ENCODE measurements at regions of chr1 and their contacts with region 1.

Region 1: DNA sequence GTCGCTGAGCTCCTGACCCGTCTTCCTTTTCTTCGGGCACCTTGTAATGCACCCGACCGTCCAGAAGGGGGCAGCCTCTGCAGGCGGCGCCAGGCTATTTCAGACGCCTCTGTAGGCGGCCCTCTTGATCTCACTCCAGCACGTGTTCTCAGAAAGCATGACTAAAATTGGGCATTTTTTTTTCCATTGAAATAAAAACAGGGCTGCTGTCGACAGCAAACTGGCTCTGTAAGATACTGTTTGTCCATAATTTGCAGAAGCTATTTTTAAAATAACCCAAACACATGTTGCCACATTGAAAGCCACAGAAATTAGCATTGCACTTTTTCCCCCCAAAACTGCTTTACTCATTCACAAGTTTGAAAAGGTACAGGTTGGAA is 78.0 kb downstream of the STUM start:
- DNase-seq: peak; percentile 90
- H3K4me3 Mint-ChIP-seq: peak overlapping the region; percentile 10
- H3K27ac Mint-ChIP-seq: peak overlapping the region; percentile 68
- H3K4me1 Mint-ChIP-seq: peaks cover 25% of the 10 kb centered on the region
- H3K27me3 Mint-ChIP-seq: no peaks in the 10 kb centered on the region

Region 2: GRCh38 chr1:226547754-226548191 is 78.8 kb before region 1 on chr1:
- CTCF ChIA-PET with region 1: interaction called, 8 read pairs
- intact Hi-C with region 1: loop called (anchors 5 kb)
- DNase-seq: peak; percentile 82
- H3K4me3 Mint-ChIP-seq: no peak overlapping the region
- H3K27ac Mint-ChIP-seq: no peak overlapping the region
- H3K4me1 Mint-ChIP-seq: peaks cover 10% of the 10 kb centered on the region
- H3K27me3 Mint-ChIP-seq: peaks cover 33% of the 10 kb centered on the region

Region 3: GRCh38 chr1:226608699-226609505 is 17.7 kb before region 1 on chr1:
- CTCF ChIA-PET with region 1: interaction called, 13 read pairs
- intact Hi-C with region 1: no loop called
- DNase-seq: peak; percentile 79
- H3K4me3 Mint-ChIP-seq: no peak overlapping the region
- H3K27ac Mint-ChIP-seq: no peak overlapping the region
- H3K4me1 Mint-ChIP-seq: no peaks in the 10 kb centered on the region
- H3K27me3 Mint-ChIP-seq: no peaks in the 10 kb centered on the region

Region 4: GRCh38 chr1:226882631-226883409 is 256.3 kb after region 1 on chr1:
- CTCF ChIA-PET with region 1: interaction called, 3 read pairs
- intact Hi-C with region 1: loop called (anchors 1 kb)
- DNase-seq: peak; percentile 57
- H3K4me3 Mint-ChIP-seq: peak overlapping the region; percentile 74
- H3K27ac Mint-ChIP-seq: peak overlapping the region; percentile 93
- H3K4me1 Mint-ChIP-seq: peaks cover 51% of the 10 kb centered on the region
- H3K27me3 Mint-ChIP-seq: no peaks in the 10 kb centered on the region